HepG2 (cell line): ENCODE measurements at regions of chr15 and their contacts with region 1.

Region 1: GRCh38 chr15:40323239-40323952 is at the start of gene INAFM2:
- DNase-seq: peak; percentile 89
- ATAC-seq: peak; percentile 94
- H3K4me3 ChIP-seq: peak within 1 kb of the TSS; percentile 36 to 75 (median 75); a peak in 5 of 6 replicates
- H3K27ac ChIP-seq: no peak within 1 kb of the TSS
- H3K4me1 ChIP-seq: peaks cover 48% of the 10 kb centered on the region
- H3K27me3 ChIP-seq: peaks cover 0 to 7% of the 10 kb centered on the region in 2 experiments; a peak in 1 of 5 replicates
- CTCF ChIP-seq: peak; percentile 72
- EP300 ChIP-seq: no peak
- POLR2A ChIP-seq: no peak
- RAD21 ChIP-seq: peak; percentile 48; the same call in 1 of the 2 replicates
- total RNA-seq, gene INAFM2: 6.5 and 8.1 TPM in 2 replicates

Region 2: GRCh38 chr15:40307421-40308211 is 15.8 kb before region 1 on chr15 and contains the start of gene PLCB2:
- CTCF ChIA-PET with region 1: no interaction called
- POLR2A ChIA-PET with region 1: no interaction called
- in situ Hi-C with region 1: no loop called
- intact Hi-C with region 1: no loop called
- DNase-seq: peak; percentile 14
- ATAC-seq: peak; percentile 69
- H3K4me3 ChIP-seq: peak within 1 kb of the TSS in 1 of 3 experiments; percentile 8; a peak in 1 of 6 replicates
- H3K27ac ChIP-seq: no peak within 1 kb of the TSS
- H3K4me1 ChIP-seq: no peaks in the 10 kb centered on the region
- H3K27me3 ChIP-seq: peaks cover 5 to 59% of the 10 kb centered on the region in 2 experiments; a peak in 4 of 5 replicates
- CTCF ChIP-seq: peak; percentile 22; the same call in 1 of the 2 replicates
- EP300 ChIP-seq: no peak
- POLR2A ChIP-seq: no peak
- RAD21 ChIP-seq: no peak
- total RNA-seq, gene PLCB2: not detected in 2 replicates

Region 3: GRCh38 chr15:40338041-40338657 is 14.8 kb after region 1 on chr15:
- CTCF ChIA-PET with region 1: interaction called, 19 read pairs
- POLR2A ChIA-PET with region 1: interaction called, 24 read pairs
- in situ Hi-C with region 1: no loop called
- intact Hi-C with region 1: loop called (anchors 1 kb)
- DNase-seq: peak; percentile 58
- ATAC-seq: peak; percentile 51
- H3K4me3 ChIP-seq: no peak overlapping the region
- H3K27ac ChIP-seq: no peak overlapping the region
- H3K4me1 ChIP-seq: peaks cover 46% of the 10 kb centered on the region
- H3K27me3 ChIP-seq: no peaks in the 10 kb centered on the region
- CTCF ChIP-seq: peak; percentile 91
- EP300 ChIP-seq: no peak
- POLR2A ChIP-seq: no peak; a peak in 1 of 4 replicates
- RAD21 ChIP-seq: peak; percentile 76